Stomach (tissue), 19 donors: ENCODE measurements at regions of chr15 and their contacts with region 1.

Region 1: GRCh38 chr15:42137431-42138261 is 18.8 kb downstream of the PLA2G4F start:
- DNase-seq: peak; percentile 25 to 75
- H3K4me3 ChIP-seq: no peak overlapping the region
- H3K27ac ChIP-seq: no peak overlapping the region
- H3K4me1 ChIP-seq: no peaks in the 10 kb centered on the region
- H3K27me3 ChIP-seq: no peaks in the 10 kb centered on the region
- CTCF ChIP-seq: peak in 5 of 7 experiments; percentile 33 to 59 (median 45)
- EP300 ChIP-seq: no peak
- POLR2A ChIP-seq: no peak

Region 2: GRCh38 chr15:42065033-42065432 is 72.6 kb before region 1 on chr15:
- intact Hi-C with region 1: loop called (anchors 5 kb)
- DNase-seq: peak; percentile 24 to 49
- H3K4me3 ChIP-seq: no peak overlapping the region
- H3K27ac ChIP-seq: no peak overlapping the region
- H3K4me1 ChIP-seq: peaks cover 0 to 8% (median 3%) of the 10 kb centered on the region in 4 donors
- H3K27me3 ChIP-seq: peaks cover 0 to 28% (median 0%) of the 10 kb centered on the region in 3 donors
- CTCF ChIP-seq: no peak
- EP300 ChIP-seq: no peak
- POLR2A ChIP-seq: no peak